Right lobe of liver (tissue), 6 donors: ENCODE measurements at regions of chr20 and their contacts with region 1.

Region 1: GRCh38 chr20:54093423-54094267 is 23.3 kb upstream of the BCAS1 start:
- DNase-seq: no peak
- ATAC-seq: no peak
- H3K4me3 ChIP-seq: no peak overlapping the region
- H3K27ac ChIP-seq: no peak overlapping the region
- H3K4me1 ChIP-seq: no peaks in the 10 kb centered on the region
- H3K27me3 ChIP-seq: no peaks in the 10 kb centered on the region
- CTCF ChIP-seq: no peak
- POLR2A ChIP-seq: no peak

Region 2: DNA sequence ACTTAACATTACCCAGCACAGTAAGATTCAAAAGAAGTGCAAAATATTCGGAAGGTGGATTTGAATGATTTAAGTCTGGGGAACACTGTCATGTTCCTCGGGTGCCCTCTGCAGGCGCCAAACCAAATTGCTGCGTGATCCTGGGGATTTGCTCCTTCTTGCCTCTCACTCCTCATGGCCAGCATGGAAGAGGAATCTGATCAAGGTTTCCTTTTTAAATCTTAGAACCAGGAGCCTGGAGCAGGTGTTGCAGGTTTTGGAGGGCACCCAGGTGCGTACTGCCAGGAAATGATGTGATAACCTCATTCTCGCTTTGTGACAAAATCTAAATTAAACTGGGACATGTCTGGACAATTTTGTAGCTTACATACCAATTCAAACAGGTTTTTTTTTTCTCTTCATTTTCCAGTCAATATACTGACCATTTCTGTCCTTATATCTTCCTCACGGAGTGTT is 106.1 kb after region 1 on chr20:
- intact Hi-C with region 1: loop called (anchors 2 to 5 kb)
- DNase-seq: peak; percentile 69 to 78 (median 78)
- ATAC-seq: peak; percentile 87 to 90 (median 88)
- H3K4me3 ChIP-seq: no peak overlapping the region
- H3K27ac ChIP-seq: no peak overlapping the region
- H3K4me1 ChIP-seq: no peaks in the 10 kb centered on the region
- H3K27me3 ChIP-seq: no peaks in the 10 kb centered on the region
- CTCF ChIP-seq: peak; percentile 84 to 94 (median 90)
- POLR2A ChIP-seq: no peak

Region 3: GRCh38 chr20:54668271-54669039 is 574.8 kb after region 1 on chr20:
- intact Hi-C with region 1: loop called in 1 of 2 experiments (anchors 10 kb)
- DNase-seq: peak in 1 of 3 donors; percentile 28
- ATAC-seq: peak; percentile 78 to 85 (median 84)
- H3K4me3 ChIP-seq: no peak overlapping the region
- H3K27ac ChIP-seq: no peak overlapping the region
- H3K4me1 ChIP-seq: no peaks in the 10 kb centered on the region
- H3K27me3 ChIP-seq: no peaks in the 10 kb centered on the region
- CTCF ChIP-seq: peak; percentile 30 to 81 (median 72)
- POLR2A ChIP-seq: no peak